Left lung (tissue), 14 donors: ENCODE measurements at regions of chr6 and their contacts with region 1.

Region 1: GRCh38 chr6:89242574-89243330 is 25.6 kb upstream of the GABRR1 start:
- DNase-seq: peak in 2 of 4 donors; percentile 28 to 65
- ATAC-seq: peak; percentile 77
- H3K4me3 ChIP-seq: no peak overlapping the region
- H3K27ac ChIP-seq: no peak overlapping the region
- H3K4me1 ChIP-seq: no peaks in the 10 kb centered on the region
- H3K27me3 ChIP-seq: no peaks in the 10 kb centered on the region
- CTCF ChIP-seq: peak; percentile 26 to 35

Region 2: GRCh38 chr6:88982720-88983119 is 260.0 kb before region 1 on chr6:
- intact Hi-C with region 1: loop called in 1 of 2 experiments (anchors 5 kb)
- DNase-seq: peak in 2 of 4 donors; percentile 41 to 68
- ATAC-seq: peak; percentile 99
- H3K4me3 ChIP-seq: no peak overlapping the region
- H3K27ac ChIP-seq: no peak overlapping the region
- H3K4me1 ChIP-seq: peaks cover 0 to 13% of the 10 kb centered on the region in 2 donors
- H3K27me3 ChIP-seq: no peaks in the 10 kb centered on the region
- CTCF ChIP-seq: peak; percentile 58 to 73

Region 3: GRCh38 chr6:89139509-89140346 is 103.0 kb before region 1 on chr6:
- intact Hi-C with region 1: loop called in 1 of 2 experiments (anchors 10 kb)
- DNase-seq: no peak
- ATAC-seq: no peak
- H3K4me3 ChIP-seq: no peak overlapping the region
- H3K27ac ChIP-seq: no peak overlapping the region
- H3K4me1 ChIP-seq: no peaks in the 10 kb centered on the region
- H3K27me3 ChIP-seq: no peaks in the 10 kb centered on the region
- CTCF ChIP-seq: no peak

Region 4: GRCh38 chr6:89330910-89331309 is 88.2 kb after region 1 on chr6:
- intact Hi-C with region 1: no loop called
- DNase-seq: no peak
- ATAC-seq: no peak
- H3K4me3 ChIP-seq: no peak overlapping the region
- H3K27ac ChIP-seq: no peak overlapping the region
- H3K4me1 ChIP-seq: no peaks in the 10 kb centered on the region
- H3K27me3 ChIP-seq: no peaks in the 10 kb centered on the region
- CTCF ChIP-seq: no peak